ENCODE measurements at regions of chr7 and their contacts with region 1.

Region 1: DNA sequence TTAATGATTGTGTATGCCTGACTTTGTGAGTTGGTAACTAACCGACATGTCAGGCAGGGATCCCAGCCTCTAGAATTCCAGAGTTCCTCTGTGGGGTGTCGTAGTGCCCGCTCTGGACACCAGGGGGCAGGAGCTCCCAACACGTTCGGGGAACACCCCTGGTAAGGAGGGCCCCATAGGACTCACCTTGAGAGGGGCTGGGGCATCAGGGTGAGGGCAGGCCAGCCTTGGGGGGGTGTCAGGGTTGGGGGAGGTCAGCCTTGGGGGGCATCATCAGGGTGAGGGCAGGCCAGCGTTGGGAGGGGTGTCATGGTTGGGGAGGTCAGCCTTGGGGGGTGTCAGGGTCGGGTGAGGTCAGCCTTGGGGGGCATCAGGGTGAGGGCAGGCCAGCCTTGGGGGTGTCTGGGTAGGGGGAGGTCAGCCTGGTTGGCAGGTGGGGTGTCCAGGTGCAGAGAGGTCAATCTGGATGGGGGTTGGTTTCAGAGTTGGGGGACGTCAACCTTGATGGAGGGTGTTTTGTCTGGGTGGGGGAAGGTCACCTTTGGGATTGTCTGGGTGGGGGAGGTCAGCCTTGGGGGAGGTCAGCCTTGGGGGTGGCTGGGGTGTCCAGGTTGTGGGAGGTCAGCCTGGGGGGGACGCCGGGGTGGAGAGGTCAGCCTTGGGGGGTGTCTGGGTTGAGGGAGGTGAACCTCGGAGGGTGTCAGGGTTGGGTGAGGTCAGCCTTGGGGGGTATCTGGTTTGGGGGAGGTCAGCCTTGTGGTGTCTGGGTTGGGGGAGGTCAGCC is 45.6 kb upstream of the SUN1 start:
- DNase-seq: peak; percentile 82

Region 2: GRCh38 chr7:405489-406211 is 381.0 kb before region 1 on chr7:
- in situ Hi-C with region 1: no loop called
- DNase-seq: no peak

Region 3: GRCh38 chr7:974820-975681 is 188.4 kb after region 1 on chr7 and contains the start of gene COX19:
- in situ Hi-C with region 1: loop called (anchors 25 kb)
- DNase-seq: peak; percentile 94

Measured in ACHN (cell line).